ENCODE measurements at regions of chr13 and their contacts with region 1.

Region 1: GRCh38 chr13:60396783-60397703 is at the start of gene TDRD3:
- DNase-seq: peak; percentile 90
- H3K4me3 ChIP-seq: peak within 1 kb of the TSS; percentile 76 to 97 (median 94)
- H3K27ac ChIP-seq: peak within 1 kb of the TSS; percentile 93
- H3K4me1 ChIP-seq: peaks cover 23% of the 10 kb centered on the region
- H3K27me3 ChIP-seq: no peaks in the 10 kb centered on the region
- CTCF ChIP-seq: peak; percentile 86 to 94
- POLR2A ChIP-seq: peak; percentile 70
- total RNA-seq, gene TDRD3: 16.3 and 18.5 TPM in 2 replicates

Region 2: GRCh38 chr13:60163478-60164233 is 233.4 kb before region 1 on chr13 and contains the start of gene DIAPH3:
- CTCF ChIA-PET with region 1: no interaction called
- POLR2A ChIA-PET with region 1: no interaction called
- dilution Hi-C with region 1: no loop called
- intact Hi-C with region 1: loop called (anchors 1 kb)
- DNase-seq: peak; percentile 96
- H3K4me3 ChIP-seq: peak within 1 kb of the TSS; percentile 91 to 97 (median 96)
- H3K27ac ChIP-seq: peak within 1 kb of the TSS; percentile 90
- H3K4me1 ChIP-seq: peaks cover 18% of the 10 kb centered on the region
- H3K27me3 ChIP-seq: no peaks in the 10 kb centered on the region
- CTCF ChIP-seq: no peak
- POLR2A ChIP-seq: peak; percentile 87
- total RNA-seq, gene DIAPH3: 40.9 and 44.0 TPM in 2 replicates

Region 3: DNA sequence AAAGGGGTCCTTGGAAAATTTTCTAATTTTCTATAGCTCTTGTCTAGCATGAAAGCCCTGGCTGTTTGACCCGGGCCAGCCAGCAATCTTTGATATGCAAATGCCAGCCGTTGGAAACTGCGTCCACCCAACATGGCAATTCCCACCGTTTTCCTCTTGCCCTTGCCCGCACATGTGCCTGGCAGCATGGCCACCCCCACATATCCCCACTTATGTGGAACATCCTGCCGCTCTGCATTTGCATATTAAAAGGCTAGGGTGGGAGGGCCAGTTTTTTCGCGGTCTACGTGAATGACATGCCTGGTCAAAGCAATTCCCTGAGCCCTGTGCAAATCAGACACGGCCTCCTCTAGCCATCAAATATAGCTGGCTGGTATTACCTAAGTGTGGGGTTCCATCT is 110.3 kb before region 1 on chr13:
- CTCF ChIA-PET with region 1: no interaction called
- POLR2A ChIA-PET with region 1: no interaction called
- dilution Hi-C with region 1: no loop called
- intact Hi-C with region 1: no loop called
- DNase-seq: no peak
- H3K4me3 ChIP-seq: no peak overlapping the region
- H3K27ac ChIP-seq: no peak overlapping the region
- H3K4me1 ChIP-seq: no peaks in the 10 kb centered on the region
- H3K27me3 ChIP-seq: peaks cover 0 to 3% of the 10 kb centered on the region in 2 experiments
- CTCF ChIP-seq: no peak
- POLR2A ChIP-seq: no peak

Region 4: DNA sequence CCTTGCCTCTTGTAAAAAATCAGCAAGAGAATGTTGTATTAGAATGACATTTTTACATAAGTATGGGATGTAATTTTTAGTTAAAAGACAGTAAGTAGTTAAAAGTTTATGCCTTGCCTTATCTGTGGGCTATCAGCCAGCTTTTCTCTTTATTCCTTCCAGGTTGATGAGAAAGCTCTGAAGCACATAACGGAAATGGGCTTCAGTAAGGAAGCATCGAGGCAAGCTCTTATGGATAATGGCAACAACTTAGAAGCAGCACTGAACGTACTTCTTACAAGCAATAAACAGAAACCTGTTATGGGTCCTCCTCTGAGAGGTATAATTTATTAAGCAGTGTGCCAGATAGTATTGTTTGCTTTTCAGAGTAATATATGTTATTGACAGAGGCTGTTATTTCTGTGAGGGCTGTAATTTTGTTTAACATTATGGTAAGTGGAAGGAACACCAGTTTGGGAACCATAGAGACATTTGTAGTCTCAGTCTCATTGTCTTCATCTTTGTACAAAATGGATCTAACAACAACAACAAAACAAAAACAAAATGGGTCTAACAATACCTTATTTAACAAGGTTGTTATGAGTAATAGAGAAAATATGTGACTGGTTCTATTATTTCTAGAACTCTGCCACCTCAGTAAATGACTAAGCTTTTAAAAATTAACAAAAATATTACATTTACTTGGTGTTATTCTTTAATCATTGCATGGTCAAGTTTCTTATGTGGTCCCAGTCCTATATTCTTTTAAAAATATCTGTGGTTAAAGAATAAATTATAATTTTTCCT is 112.8 kb after region 1 on chr13:
- CTCF ChIA-PET with region 1: no interaction called
- POLR2A ChIA-PET with region 1: no interaction called
- dilution Hi-C with region 1: no loop called
- intact Hi-C with region 1: loop called (anchors 2 kb)
- DNase-seq: peak; percentile 68
- H3K4me3 ChIP-seq: no peak overlapping the region
- H3K27ac ChIP-seq: peak overlapping the region; percentile 80
- H3K4me1 ChIP-seq: peaks cover 18% of the 10 kb centered on the region
- H3K27me3 ChIP-seq: no peaks in the 10 kb centered on the region
- CTCF ChIP-seq: no peak
- POLR2A ChIP-seq: no peak

Region 5: DNA sequence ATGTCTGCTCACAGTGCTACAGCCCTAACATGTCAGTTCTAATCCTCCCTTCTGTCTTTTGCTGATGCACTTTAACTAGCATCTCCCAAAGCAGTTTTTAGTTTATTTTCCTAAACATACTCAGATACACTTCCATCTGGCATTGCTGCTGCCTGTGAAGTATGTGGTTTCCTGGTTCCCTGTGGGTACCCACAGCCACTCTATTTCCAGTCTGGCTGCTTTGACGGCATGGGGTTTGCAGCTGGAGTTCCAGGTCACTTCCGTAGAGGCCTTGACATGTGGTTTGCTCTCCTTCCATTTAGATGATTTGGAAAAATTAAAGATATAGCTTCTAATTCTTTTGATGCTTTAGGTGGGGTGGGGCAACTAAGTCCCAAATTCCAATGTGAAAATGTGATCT is 643.1 kb after region 1 on chr13:
- CTCF ChIA-PET with region 1: no interaction called
- POLR2A ChIA-PET with region 1: no interaction called
- dilution Hi-C with region 1: no loop called
- intact Hi-C with region 1: no loop called
- DNase-seq: no peak
- H3K4me3 ChIP-seq: no peak overlapping the region
- H3K27ac ChIP-seq: no peak overlapping the region
- H3K4me1 ChIP-seq: no peaks in the 10 kb centered on the region
- H3K27me3 ChIP-seq: no peaks in the 10 kb centered on the region
- CTCF ChIP-seq: no peak
- POLR2A ChIP-seq: no peak

Measured in endothelial cell of umbilical vein (primary cell).